ENCODE measurements at regions of chr5 and their contacts with region 1.

Region 1: DNA sequence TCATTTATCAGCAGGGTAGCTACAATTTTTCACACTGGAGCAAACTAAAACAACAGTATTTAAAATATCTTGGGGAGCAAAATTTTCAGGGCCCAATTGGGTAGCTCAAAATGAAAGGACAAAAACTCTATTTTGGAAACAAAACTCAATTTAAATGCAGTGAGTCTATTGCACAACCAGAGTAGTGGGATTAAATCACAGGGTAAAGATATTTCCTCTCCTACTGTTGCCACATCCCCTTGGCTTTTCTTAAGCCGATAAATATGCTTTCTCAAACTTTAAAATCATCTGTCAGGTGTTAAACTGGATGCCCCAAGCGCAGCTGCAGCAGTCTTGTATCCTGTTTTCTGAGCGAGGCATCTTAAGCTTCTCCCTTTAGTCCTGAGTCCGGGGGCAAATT is 1474.3 kb upstream of the CDH9 start:
- DNase-seq: no peak
- ATAC-seq: no peak
- H3K4me3 ChIP-seq: no peak overlapping the region
- H3K27ac ChIP-seq: no peak overlapping the region
- H3K4me1 ChIP-seq: no peaks in the 10 kb centered on the region
- H3K27me3 ChIP-seq: no peaks in the 10 kb centered on the region
- CTCF ChIP-seq: no peak
- EP300 ChIP-seq: no peak
- POLR2A ChIP-seq: no peak
- RAD21 ChIP-seq: no peak

Region 2: GRCh38 chr5:27996665-27997064 is 516.0 kb before region 1 on chr5:
- CTCF ChIA-PET with region 1: no interaction called
- POLR2A ChIA-PET with region 1: no interaction called
- RAD21 ChIA-PET with region 1: no interaction called
- SMC1A ChIA-PET with region 1: no interaction called
- in situ Hi-C with region 1: no loop called
- intact Hi-C with region 1: no loop called
- DNase-seq: no peak
- ATAC-seq: no peak
- H3K4me3 ChIP-seq: no peak overlapping the region
- H3K27ac ChIP-seq: no peak overlapping the region
- H3K4me1 ChIP-seq: no peaks in the 10 kb centered on the region
- H3K27me3 ChIP-seq: no peaks in the 10 kb centered on the region
- CTCF ChIP-seq: no peak
- EP300 ChIP-seq: no peak
- POLR2A ChIP-seq: no peak
- RAD21 ChIP-seq: no peak

Region 3: DNA sequence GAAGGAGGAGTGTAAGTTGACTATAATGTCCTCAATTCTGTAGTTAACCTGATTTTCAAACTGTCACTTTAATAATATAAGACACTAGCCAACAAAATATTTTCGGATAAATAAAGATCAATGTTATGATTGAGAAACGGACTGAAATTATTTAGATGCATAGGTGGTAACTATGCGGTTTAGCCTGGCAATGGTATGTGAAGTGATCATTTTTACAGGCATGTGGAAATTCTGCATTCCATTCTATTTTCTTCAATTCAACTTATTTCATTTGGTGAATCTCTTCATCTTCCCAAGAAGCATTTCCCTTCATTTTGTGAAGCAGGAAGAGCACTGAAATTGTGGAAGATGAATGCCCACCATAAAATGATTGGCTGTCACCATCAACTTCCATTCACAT is 16.8 kb before region 1 on chr5:
- CTCF ChIA-PET with region 1: interaction called, 12 read pairs
- POLR2A ChIA-PET with region 1: no interaction called
- RAD21 ChIA-PET with region 1: no interaction called
- SMC1A ChIA-PET with region 1: interaction called, 13 read pairs
- in situ Hi-C with region 1: no loop called
- intact Hi-C with region 1: no loop called
- DNase-seq: no peak
- ATAC-seq: no peak
- H3K4me3 ChIP-seq: no peak overlapping the region
- H3K27ac ChIP-seq: no peak overlapping the region
- H3K4me1 ChIP-seq: no peaks in the 10 kb centered on the region
- H3K27me3 ChIP-seq: no peaks in the 10 kb centered on the region
- CTCF ChIP-seq: no peak
- EP300 ChIP-seq: no peak
- POLR2A ChIP-seq: no peak
- RAD21 ChIP-seq: no peak

Region 4: GRCh38 chr5:28523888-28524635 is 11.4 kb after region 1 on chr5:
- CTCF ChIA-PET with region 1: interaction called, 10 read pairs
- POLR2A ChIA-PET with region 1: no interaction called
- RAD21 ChIA-PET with region 1: interaction called, 5 read pairs
- SMC1A ChIA-PET with region 1: interaction called, 10 read pairs
- in situ Hi-C with region 1: no loop called
- intact Hi-C with region 1: no loop called
- DNase-seq: no peak
- ATAC-seq: peak; percentile 44; the same call in 2 of the 3 replicates
- H3K4me3 ChIP-seq: no peak overlapping the region
- H3K27ac ChIP-seq: no peak overlapping the region
- H3K4me1 ChIP-seq: no peaks in the 10 kb centered on the region
- H3K27me3 ChIP-seq: no peaks in the 10 kb centered on the region
- CTCF ChIP-seq: no peak
- EP300 ChIP-seq: no peak
- POLR2A ChIP-seq: no peak
- RAD21 ChIP-seq: no peak

Region 5: GRCh38 chr5:28557114-28557513 is 44.5 kb after region 1 on chr5:
- CTCF ChIA-PET with region 1: no interaction called
- POLR2A ChIA-PET with region 1: no interaction called
- RAD21 ChIA-PET with region 1: no interaction called
- SMC1A ChIA-PET with region 1: no interaction called
- in situ Hi-C with region 1: no loop called
- intact Hi-C with region 1: no loop called
- DNase-seq: no peak
- ATAC-seq: no peak
- H3K4me3 ChIP-seq: no peak overlapping the region
- H3K27ac ChIP-seq: no peak overlapping the region
- H3K4me1 ChIP-seq: no peaks in the 10 kb centered on the region
- H3K27me3 ChIP-seq: no peaks in the 10 kb centered on the region
- CTCF ChIP-seq: no peak
- EP300 ChIP-seq: no peak
- POLR2A ChIP-seq: no peak
- RAD21 ChIP-seq: no peak

Region 6: DNA sequence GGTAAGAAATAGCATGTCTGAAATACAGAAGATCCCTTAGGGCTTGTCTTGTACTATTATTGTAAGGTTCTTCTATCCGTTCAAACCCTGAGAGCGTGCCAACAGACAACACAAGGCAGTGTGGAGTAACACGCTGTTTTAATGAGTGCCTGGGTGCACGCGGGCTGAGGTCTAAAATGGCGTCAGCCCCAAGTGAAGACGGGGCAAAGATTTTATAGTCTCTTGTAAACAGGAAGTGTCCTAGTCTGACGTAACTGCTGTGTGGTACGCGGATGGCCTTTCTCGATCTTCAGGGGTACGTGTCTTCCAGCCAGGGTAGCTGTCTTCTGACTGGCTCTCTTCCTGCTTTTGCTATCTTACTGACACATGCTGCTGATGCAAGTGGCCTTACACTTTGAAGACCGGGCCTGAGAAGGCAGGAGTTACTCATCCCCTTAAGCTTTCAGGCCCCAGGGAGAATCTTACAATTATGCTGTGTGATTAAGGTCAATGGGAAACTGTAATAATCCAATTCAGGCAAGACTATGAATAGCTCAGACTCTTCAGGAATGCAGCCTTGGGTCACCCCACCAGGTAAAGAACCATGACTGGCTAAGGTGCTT is 337.8 kb after region 1 on chr5:
- CTCF ChIA-PET with region 1: no interaction called
- POLR2A ChIA-PET with region 1: no interaction called
- RAD21 ChIA-PET with region 1: no interaction called
- SMC1A ChIA-PET with region 1: no interaction called
- in situ Hi-C with region 1: no loop called
- intact Hi-C with region 1: no loop called
- DNase-seq: no peak
- ATAC-seq: no peak
- H3K4me3 ChIP-seq: no peak overlapping the region
- H3K27ac ChIP-seq: no peak overlapping the region
- H3K4me1 ChIP-seq: no peaks in the 10 kb centered on the region
- H3K27me3 ChIP-seq: no peaks in the 10 kb centered on the region
- CTCF ChIP-seq: no peak
- EP300 ChIP-seq: no peak
- POLR2A ChIP-seq: no peak
- RAD21 ChIP-seq: no peak